CD14-positive monocyte (primary cell): ENCODE measurements at regions of chr1 and their contacts with region 1.

Region 1: GRCh38 chr1:27671964-27672749 is at the start of gene IFI6:
- DNase-seq: peak; percentile 77 to 86 (median 82)
- H3K4me3 ChIP-seq: peak within 1 kb of the TSS; percentile 59 to 90 (median 63)
- H3K4me3 Mint-ChIP-seq: peak within 1 kb of the TSS; percentile 92 to 97
- H3K27ac ChIP-seq: peak within 1 kb of the TSS; percentile 58 to 74
- H3K27ac Mint-ChIP-seq: peak within 1 kb of the TSS; percentile 89 to 95 (median 93)
- H3K4me1 ChIP-seq: peaks cover 42 to 59% of the 10 kb centered on the region in 2 donors
- H3K4me1 Mint-ChIP-seq: peaks cover 40% of the 10 kb centered on the region
- H3K27me3 ChIP-seq: no peaks in the 10 kb centered on the region
- H3K27me3 Mint-ChIP-seq: peaks cover 0 to 3% (median 2%) of the 10 kb centered on the region in 3 donors
- CTCF ChIP-seq: no peak
- polyA plus RNA-seq, gene IFI6: 69.9 to 276 (median 276) TPM

Region 2: DNA sequence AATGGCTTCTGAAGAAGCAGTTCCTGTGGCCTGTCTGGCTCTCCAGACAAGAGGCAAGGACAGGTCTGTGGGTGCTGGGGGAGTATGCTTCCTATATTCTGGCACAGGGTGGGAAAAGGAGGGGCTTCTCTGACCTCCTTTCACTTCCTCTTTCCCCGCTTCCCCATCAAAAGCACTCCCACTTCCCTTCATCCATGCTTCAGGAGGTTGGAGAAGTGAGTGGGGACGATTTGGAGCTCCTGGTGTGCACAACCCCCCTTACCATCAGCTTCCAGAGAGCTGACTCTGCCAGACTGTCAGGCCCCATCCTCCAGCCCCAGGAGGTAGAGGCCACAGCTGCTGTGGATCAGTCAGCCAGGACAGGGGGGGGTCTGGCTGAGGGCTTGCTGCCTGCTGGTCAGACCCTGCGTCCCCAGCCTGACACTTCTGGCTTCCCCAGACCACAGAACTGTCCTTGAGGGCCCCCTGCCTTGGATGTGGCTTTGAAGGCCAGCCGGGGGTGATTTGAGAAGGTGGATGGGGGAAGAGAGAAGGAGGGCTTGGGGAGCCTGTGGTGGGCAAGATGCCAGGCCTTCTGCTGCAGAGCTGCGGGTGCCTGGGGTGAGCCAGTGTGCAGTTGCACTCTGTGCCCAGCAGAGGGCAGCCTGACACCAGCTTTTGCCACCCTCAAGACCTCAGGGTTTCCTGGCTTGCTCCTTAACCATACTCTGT is 371.7 kb before region 1 on chr1:
- intact Hi-C with region 1: loop called in 1 of 2 experiments (anchors 10 kb)
- DNase-seq: peak; percentile 76 to 83 (median 81)
- H3K4me3 ChIP-seq: peak overlapping the region in 1 of 3 experiments; percentile 27
- H3K4me3 Mint-ChIP-seq: no peak overlapping the region
- H3K27ac ChIP-seq: peak overlapping the region; percentile 75 to 84
- H3K27ac Mint-ChIP-seq: peak overlapping the region; percentile 72 to 92 (median 89)
- H3K4me1 ChIP-seq: peaks cover 25 to 26% of the 10 kb centered on the region in 2 donors
- H3K4me1 Mint-ChIP-seq: peaks cover 23% of the 10 kb centered on the region
- H3K27me3 ChIP-seq: no peaks in the 10 kb centered on the region
- H3K27me3 Mint-ChIP-seq: no peaks in the 10 kb centered on the region
- CTCF ChIP-seq: peak; percentile 98

Region 3: DNA sequence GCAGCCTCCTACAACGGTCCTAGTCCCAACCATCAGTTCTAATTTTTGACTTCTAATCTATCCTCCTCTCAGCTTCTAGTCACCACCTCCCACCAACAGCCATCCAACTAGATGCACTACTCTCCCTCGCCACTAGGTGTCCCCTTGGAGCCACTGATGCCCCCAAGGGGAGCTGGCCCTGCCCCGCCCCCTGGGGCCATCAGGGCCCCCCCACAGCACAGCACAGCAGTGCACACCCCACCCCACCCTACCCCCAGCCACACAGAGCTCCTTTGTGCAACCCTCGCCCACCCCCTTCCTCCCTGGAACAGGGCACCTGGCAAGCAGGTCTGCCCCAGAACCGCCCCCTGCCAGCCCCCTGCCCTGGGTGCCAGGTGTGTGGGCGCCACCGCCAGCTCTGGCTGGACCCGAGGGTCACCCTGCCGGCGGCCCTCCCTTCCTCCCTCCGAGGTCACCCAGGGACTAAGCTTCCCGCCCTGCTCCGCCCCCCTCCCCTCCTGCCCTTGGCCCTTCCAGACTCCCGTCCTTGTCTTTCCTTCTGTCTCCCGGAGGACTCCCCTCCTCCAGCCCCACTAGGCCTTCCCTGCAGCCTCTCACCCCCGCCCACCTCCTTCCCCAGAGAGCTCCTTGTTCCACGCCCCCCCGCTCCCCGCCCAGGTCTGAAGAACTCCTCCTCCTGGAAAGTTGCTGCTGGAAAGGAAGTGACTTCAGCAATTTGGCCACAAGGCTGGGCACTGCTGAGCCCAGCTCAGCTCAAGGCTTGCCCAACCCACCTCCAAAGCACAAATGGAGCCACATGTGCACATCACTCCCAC is 115.2 kb before region 1 on chr1:
- intact Hi-C with region 1: loop called in 1 of 2 experiments (anchors 5 kb)
- DNase-seq: peak; percentile 81 to 83 (median 81)
- H3K4me3 ChIP-seq: peak overlapping the region; percentile 1 to 74 (median 29)
- H3K4me3 Mint-ChIP-seq: peak overlapping the region; percentile 61 to 74
- H3K27ac ChIP-seq: peak overlapping the region; percentile 14 to 17
- H3K27ac Mint-ChIP-seq: peak overlapping the region; percentile 73 to 90 (median 84)
- H3K4me1 ChIP-seq: peaks cover 21 to 22% of the 10 kb centered on the region in 2 donors
- H3K4me1 Mint-ChIP-seq: peaks cover 26% of the 10 kb centered on the region
- H3K27me3 ChIP-seq: no peaks in the 10 kb centered on the region
- H3K27me3 Mint-ChIP-seq: peaks cover 0 to 6% (median 4%) of the 10 kb centered on the region in 3 donors
- CTCF ChIP-seq: peak; percentile 99

Region 4: DNA sequence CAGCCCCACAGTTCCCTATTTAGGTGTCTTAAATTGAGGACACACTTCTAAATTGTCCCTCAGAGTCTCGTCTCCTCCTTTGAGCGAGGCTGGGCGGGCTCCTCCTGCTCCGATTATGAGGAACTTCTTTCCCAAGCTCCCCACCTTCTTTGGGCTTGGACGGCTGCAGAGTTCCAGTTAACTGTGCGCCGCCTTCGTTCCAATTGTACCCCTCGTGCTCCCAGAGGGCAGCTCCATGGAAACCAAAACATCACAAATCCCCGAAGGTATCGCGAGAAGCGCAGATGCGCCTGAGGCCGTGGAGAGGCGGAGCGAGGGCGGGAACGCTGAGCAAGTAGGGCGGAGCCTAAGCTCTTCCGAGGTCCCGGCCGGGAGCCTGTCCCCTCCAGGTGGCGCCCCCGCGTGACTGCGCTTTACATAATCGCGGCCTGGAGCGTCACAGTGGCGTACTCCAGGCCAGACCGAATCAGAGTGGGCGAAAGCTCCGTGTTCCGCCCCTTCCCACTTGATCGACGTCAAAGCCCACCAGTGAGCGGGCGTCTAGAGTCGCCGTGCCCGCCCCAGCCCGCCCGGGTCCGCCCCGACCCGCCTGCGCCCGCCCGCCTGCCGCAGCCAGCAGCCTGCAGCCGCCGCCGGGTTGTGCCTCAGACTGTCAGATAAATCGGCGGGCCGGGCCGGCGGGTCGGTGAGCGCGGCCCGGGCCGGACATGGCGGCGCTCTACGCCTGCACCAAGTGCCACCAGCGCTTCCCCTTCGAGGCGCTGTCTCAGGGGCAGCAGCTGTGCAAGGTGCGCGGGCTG is 53.4 kb after region 1 on chr1 and contains the start of gene FAM76A:
- intact Hi-C with region 1: loop called in 1 of 2 experiments (anchors 5 kb)
- DNase-seq: peak; percentile 99 to 100 (median 100)
- H3K4me3 ChIP-seq: peak within 1 kb of the TSS; percentile 83 to 87 (median 84)
- H3K4me3 Mint-ChIP-seq: peak within 1 kb of the TSS; percentile 87 to 91
- H3K27ac ChIP-seq: peak within 1 kb of the TSS; percentile 69 to 88
- H3K27ac Mint-ChIP-seq: peak within 1 kb of the TSS; percentile 93 to 98 (median 96)
- H3K4me1 ChIP-seq: peaks cover 18 to 20% of the 10 kb centered on the region in 2 donors
- H3K4me1 Mint-ChIP-seq: peaks cover 19% of the 10 kb centered on the region
- H3K27me3 ChIP-seq: no peaks in the 10 kb centered on the region
- H3K27me3 Mint-ChIP-seq: peaks cover 0 to 2% (median 2%) of the 10 kb centered on the region in 3 donors
- CTCF ChIP-seq: peak; percentile 29
- polyA plus RNA-seq, gene FAM76A: 9.1 to 10.9 (median 10.3) TPM